ENCODE measurements at regions of chr20 and their contacts with region 1.

Region 1: GRCh38 chr20:3407771-3408637 is 535 bp upstream of the DNAAF9 start:
- DNase-seq: peak; percentile 90

Region 2: GRCh38 chr20:3430376-3431069 is 22.5 kb after region 1 on chr20:
- CTCF ChIA-PET with region 1: no interaction called
- POLR2A ChIA-PET with region 1: interaction called, 13 read pairs
- DNase-seq: no peak

Measured in HEK293T (cell line).